ENCODE measurements at regions of chr1 and their contacts with region 1.

Region 1: GRCh38 chr1:212791676-212792395 is at the starts of genes NSL1 and TATDN3:
- DNase-seq: peak; percentile 79 to 95
- H3K4me3 ChIP-seq: peak within 1 kb of the TSS; percentile 93
- H3K27ac ChIP-seq: peak within 1 kb of the TSS; percentile 63
- H3K4me1 ChIP-seq: peaks cover 15% of the 10 kb centered on the region
- H3K27me3 ChIP-seq: no peaks in the 10 kb centered on the region
- CTCF ChIP-seq: no peak; the same call in 1 of the 2 replicates
- total RNA-seq, gene NSL1: 28.9 and 32.4 TPM in 2 replicates
- total RNA-seq, gene TATDN3: 10.2 and 12.3 TPM in 2 replicates

Region 2: GRCh38 chr1:212671342-212672031 is 120.3 kb before region 1 on chr1:
- CTCF ChIA-PET with region 1: no interaction called
- POLR2A ChIA-PET with region 1: no interaction called
- intact Hi-C with region 1: no loop called
- DNase-seq: peak; percentile 63 to 72
- H3K4me3 ChIP-seq: no peak overlapping the region
- H3K27ac ChIP-seq: no peak overlapping the region
- H3K4me1 ChIP-seq: peaks cover 31% of the 10 kb centered on the region
- H3K27me3 ChIP-seq: no peaks in the 10 kb centered on the region
- CTCF ChIP-seq: no peak

Region 3: GRCh38 chr1:212718017-212718416 is 73.8 kb before region 1 on chr1:
- CTCF ChIA-PET with region 1: no interaction called
- POLR2A ChIA-PET with region 1: no interaction called
- intact Hi-C with region 1: no loop called
- DNase-seq: no peak
- H3K4me3 ChIP-seq: no peak overlapping the region
- H3K27ac ChIP-seq: no peak overlapping the region
- H3K4me1 ChIP-seq: peaks cover 15% of the 10 kb centered on the region
- H3K27me3 ChIP-seq: no peaks in the 10 kb centered on the region
- CTCF ChIP-seq: no peak

Region 4: DNA sequence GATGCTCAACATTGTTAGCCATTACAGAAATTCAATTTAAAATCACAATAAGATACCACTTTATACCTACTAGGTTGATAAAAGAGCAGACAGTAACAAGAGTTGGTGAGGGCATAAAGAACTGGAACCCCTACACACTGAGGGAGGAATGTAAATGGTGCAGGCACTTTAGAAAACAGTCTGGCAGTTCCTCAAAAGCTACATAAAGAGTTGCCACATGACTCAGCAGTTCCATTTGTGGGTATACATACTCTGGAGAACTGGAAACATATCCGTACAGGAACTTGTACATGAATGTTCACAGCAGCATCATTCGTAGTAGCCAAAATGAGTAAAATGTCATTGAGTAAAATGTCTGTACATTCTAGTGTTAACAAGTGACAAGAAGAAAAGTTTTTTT is 17.3 kb before region 1 on chr1:
- CTCF ChIA-PET with region 1: no interaction called
- POLR2A ChIA-PET with region 1: no interaction called
- intact Hi-C with region 1: no loop called
- DNase-seq: no peak
- H3K4me3 ChIP-seq: no peak overlapping the region
- H3K27ac ChIP-seq: 0 out of 2 replicates have a peak overlapping the region, but pooled peaks have one; percentile 3
- H3K4me1 ChIP-seq: no peaks in the 10 kb centered on the region
- H3K27me3 ChIP-seq: no peaks in the 10 kb centered on the region
- CTCF ChIP-seq: no peak

Region 5: DNA sequence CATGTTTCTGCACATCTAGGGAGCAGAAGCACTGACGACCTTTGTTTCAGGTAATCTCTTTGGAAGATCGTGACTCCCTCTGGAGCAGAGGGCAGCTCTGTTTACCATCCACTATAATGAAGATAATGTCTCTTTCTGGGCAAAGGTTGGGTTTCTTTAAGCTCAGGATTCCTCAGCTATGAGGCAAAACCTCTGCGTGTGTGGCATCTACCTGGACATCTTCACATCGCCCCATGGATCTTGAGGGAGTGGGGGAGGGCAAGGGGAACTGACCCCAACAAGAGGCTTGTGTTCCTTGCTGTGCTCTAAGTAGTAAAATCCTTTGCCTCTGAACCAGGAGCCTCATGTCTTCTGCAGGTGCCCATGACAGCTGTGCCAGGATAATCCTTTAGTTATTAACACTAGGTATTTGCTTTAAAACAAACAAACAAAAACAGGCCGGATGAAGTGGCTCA is 36.0 kb after region 1 on chr1:
- CTCF ChIA-PET with region 1: no interaction called
- POLR2A ChIA-PET with region 1: no interaction called
- intact Hi-C with region 1: no loop called
- DNase-seq: no peak
- H3K4me3 ChIP-seq: no peak overlapping the region
- H3K27ac ChIP-seq: no peak overlapping the region
- H3K4me1 ChIP-seq: no peaks in the 10 kb centered on the region
- H3K27me3 ChIP-seq: no peaks in the 10 kb centered on the region
- CTCF ChIP-seq: no peak

Region 6: GRCh38 chr1:212857992-212858460 is 66.2 kb after region 1 on chr1 and contains the start of gene FLVCR1:
- CTCF ChIA-PET with region 1: interaction called, 6 read pairs
- POLR2A ChIA-PET with region 1: interaction called, 6 read pairs
- intact Hi-C with region 1: loop called (anchors 5 kb)
- DNase-seq: peak; percentile 92 to 95
- H3K4me3 ChIP-seq: peak within 1 kb of the TSS; percentile 87
- H3K27ac ChIP-seq: peak within 1 kb of the TSS; percentile 57
- H3K4me1 ChIP-seq: peaks cover 36% of the 10 kb centered on the region
- H3K27me3 ChIP-seq: no peaks in the 10 kb centered on the region
- CTCF ChIP-seq: no peak; the same call in 1 of the 2 replicates
- total RNA-seq, gene FLVCR1: 5.5 and 13.1 TPM in 2 replicates

Region 7: DNA sequence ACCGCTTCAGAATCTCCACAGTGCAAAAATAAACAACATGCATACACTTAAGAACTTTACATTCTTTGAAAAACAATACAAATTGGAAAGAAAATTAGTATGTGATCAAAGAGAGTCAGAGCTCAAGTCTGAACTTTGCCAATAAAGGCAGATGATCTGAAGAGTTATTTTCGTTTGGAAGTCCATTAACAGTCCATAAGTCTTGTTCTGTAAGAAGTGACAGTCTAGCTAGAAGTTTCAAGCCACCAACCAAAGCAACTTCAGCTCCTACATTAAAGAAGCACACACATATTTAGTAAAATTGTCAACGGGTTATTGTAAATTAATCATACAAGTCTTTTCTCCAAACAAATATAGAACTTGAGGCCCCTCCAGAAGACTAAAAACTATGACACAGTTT is 203.1 kb after region 1 on chr1:
- CTCF ChIA-PET with region 1: no interaction called
- POLR2A ChIA-PET with region 1: no interaction called
- intact Hi-C with region 1: loop called (anchors 5 kb)
- DNase-seq: no peak
- H3K4me3 ChIP-seq: no peak overlapping the region
- H3K27ac ChIP-seq: no peak overlapping the region
- H3K4me1 ChIP-seq: no peaks in the 10 kb centered on the region
- H3K27me3 ChIP-seq: no peaks in the 10 kb centered on the region
- CTCF ChIP-seq: no peak